Tibial artery (tissue), 4 donors: ENCODE measurements at regions of chr10 and their contacts with region 1.

Region 1: DNA sequence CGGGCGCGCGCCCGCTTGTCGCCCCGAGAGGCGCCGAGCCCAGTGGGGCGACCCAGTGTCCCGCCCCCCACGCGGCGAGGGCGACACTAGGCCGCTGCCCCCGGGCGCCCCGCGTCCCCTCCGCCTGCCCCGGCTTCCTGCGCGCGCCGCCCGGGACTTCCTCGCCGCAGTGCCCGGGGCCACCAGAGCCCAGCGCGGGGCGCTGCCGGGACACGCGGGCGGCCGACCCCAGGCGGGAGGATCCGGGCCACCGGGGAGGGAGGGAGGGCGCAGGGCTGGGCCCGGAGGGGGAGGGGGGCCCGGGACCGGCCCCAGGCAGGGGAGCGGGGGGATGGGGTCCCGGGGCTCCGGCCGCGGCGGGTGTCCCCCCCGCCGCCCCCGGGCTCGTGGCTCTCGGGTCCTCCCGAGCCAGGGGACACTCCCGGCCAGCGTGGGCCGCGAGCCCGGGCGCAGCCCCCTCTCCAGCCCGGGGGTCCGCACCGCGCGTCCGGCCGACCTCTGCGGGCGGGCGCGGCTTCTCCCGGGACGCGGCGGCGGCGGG is 435 bp upstream of the PWWP2B start:
- DNase-seq: peak in 1 of 2 donors; percentile 83
- H3K4me3 ChIP-seq: peak overlapping the region; percentile 98 to 99
- H3K27ac ChIP-seq: peak overlapping the region; percentile 84 to 98
- H3K4me1 ChIP-seq: peaks cover 0 to 56% (median 29%) of the 10 kb centered on the region in 4 donors
- H3K27me3 ChIP-seq: no peaks in the 10 kb centered on the region
- CTCF ChIP-seq: peak; percentile 36 to 49

Region 2: DNA sequence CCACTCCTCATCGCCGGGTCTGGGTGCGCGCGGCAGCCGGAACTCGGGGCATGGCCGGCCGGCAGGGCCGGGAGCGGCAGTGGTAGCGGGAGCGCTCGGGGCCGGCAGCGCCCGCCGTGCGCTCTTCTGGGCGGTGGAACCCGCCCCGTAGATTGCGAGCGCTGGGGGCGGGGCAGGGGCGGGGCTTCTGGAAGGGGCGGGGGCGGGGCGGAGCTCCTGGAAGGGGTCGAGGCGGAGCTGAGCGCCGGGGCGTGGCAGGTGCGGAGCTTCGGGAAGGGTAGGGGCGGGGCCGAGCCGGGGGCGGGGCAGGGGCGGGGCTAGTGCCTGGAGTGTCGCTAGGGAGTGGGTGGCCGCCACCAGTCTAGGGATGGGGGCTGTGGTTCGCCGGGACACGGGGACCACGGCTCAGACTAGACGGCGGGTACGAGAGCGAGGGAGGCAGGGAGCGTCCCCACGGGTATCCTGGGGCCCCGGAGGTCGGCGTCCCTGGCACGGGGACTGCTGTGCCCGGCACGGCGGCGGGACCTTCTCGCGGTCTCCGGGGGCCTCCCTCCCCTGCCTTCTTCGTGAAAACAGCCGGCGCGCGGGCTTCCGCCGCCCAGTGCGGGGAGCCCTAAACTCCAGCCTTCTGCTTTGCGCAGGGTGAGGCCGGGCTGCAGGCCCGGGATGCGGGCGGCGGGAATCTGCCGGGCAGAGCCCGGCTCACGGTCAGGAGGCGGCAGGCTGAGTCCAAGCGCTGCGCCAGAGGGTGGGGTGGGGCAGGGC is 88.6 kb before region 1 on chr10 and contains the start of gene STK32C:
- intact Hi-C with region 1: no loop called
- DNase-seq: peak; percentile 89 to 93
- H3K4me3 ChIP-seq: peak within 1 kb of the TSS; percentile 66 to 82
- H3K27ac ChIP-seq: peak within 1 kb of the TSS; percentile 80 to 89
- H3K4me1 ChIP-seq: peaks cover 0 to 19% (median 15%) of the 10 kb centered on the region in 4 donors
- H3K27me3 ChIP-seq: peaks cover 0 to 21% of the 10 kb centered on the region in 2 donors
- CTCF ChIP-seq: no peak

Region 3: DNA sequence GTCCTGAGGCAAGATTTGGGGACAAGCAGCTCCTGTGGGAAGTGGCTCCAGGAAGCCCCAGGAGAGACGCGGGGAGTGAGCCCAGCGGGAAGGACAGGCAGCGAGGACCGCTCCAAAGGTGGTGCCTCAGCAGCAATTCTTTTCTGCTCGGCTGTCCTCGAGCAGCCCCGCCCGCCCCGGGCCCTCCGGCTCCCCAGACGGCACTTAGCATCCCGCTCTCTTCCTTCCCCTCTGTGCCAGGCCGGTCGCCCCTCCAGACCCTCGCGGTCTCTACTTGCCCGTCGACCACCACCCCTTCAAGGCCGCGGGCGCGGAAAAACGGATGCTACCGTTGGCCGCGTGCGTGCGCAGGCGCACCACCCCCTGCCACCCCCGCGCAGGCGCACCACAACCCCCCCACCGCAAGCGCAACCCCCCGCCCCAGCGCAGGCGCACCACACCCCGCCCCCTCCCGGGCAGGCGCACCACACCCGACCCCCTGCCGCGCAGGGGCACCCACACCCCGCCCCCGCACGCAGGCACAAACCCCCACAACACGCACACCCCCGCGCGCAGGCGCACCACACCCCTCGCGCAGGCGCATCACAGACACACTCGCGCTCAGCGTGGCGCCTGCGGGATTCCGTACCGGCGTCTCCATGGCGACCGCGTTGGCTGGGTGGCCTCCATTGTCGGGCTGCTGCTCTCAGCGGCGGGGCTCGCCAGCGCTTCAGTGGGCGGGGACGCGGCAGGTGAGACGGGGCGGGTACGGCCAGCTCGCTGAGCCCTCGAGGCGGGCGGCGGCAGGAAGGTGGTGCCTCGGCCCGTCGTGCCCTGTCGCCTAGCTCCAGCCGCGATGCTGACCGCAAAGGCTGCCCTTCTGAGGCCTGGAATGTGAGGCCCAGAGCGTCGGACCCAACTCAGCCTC is 64.8 kb before region 1 on chr10 and contains the start of gene LRRC27:
- intact Hi-C with region 1: loop called (anchors 10 kb)
- DNase-seq: peak; percentile 97 to 99
- H3K4me3 ChIP-seq: peak within 1 kb of the TSS; percentile 76 to 78
- H3K27ac ChIP-seq: peak within 1 kb of the TSS; percentile 74 to 83
- H3K4me1 ChIP-seq: peaks cover 0 to 35% (median 23%) of the 10 kb centered on the region in 4 donors
- H3K27me3 ChIP-seq: no peaks in the 10 kb centered on the region
- CTCF ChIP-seq: no peak

Region 4: DNA sequence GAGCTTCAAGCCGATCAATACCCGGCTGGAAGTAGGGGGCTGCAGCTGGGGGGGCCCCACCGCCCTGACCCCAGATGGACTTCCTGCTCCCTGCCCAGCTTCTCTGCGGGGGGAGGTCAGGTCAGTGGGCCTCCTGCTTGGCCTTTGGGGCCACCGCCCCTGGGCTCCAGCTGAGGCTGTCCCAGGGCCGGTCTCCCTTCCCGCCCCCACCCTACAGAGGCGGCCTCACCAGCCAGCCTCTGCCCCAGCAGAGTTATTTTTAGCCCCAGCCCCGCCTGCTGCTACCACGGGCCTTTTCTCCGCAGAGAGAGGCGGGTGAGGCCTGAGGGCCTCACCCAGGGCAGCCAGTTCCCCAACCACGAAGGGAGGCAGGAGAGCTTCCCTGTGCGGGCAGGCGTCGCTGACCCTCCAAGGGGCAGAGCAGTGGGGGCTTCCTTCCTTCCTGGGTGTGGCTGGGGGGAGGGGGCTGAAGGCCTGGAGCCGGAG is 24.9 kb after region 1 on chr10:
- intact Hi-C with region 1: loop called (anchors 1 kb)
- DNase-seq: peak; percentile 83 to 93
- H3K4me3 ChIP-seq: peak overlapping the region; percentile 25 to 42
- H3K27ac ChIP-seq: peak overlapping the region; percentile 89 to 91
- H3K4me1 ChIP-seq: peaks cover 13 to 55% (median 40%) of the 10 kb centered on the region in 4 donors
- H3K27me3 ChIP-seq: no peaks in the 10 kb centered on the region
- CTCF ChIP-seq: no peak

Region 5: DNA sequence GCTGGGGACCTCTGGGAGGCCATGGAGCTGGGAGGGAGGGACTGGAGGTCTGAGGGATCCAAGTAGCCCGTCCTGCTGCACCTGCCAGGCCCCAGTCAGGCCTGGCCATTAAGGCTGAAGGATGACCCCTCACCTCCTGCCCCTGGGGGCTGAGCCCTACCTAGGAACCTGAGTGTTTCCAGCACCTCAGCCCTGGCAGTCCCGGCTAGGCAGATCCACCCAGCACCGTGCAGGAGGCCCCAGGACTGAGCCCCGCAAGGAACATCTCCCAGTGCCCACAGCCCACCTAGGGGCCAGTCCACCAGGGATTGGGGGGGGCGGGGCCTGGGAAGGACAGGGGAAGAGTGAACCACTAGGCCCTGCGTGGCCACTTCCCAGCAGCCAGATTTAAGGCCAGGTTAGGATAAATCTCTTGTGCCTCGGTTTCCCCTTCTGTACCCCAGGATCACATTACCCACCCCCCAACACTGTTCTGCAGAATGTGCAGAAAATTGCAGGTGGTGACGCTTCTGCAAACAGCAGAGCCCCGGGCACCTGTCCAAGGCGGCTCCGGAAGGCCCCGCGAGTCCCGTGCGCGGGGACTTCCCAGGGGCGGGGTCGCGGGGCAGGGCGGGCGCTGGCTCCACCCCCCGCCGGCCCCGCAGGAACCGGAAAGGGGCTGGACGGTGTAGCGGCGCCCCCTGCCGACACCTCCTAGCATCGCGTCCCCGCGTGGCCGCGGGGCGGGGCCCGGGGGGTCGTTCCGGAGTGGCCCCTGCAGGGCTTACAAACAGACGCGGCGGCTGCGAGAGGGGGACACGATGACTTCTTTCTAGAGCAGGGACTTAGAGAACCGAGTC is 56.3 kb after region 1 on chr10:
- intact Hi-C with region 1: loop called (anchors 2 kb)
- DNase-seq: peak; percentile 68 to 89
- H3K4me3 ChIP-seq: peak overlapping the region in 1 of 2 donors; percentile 7
- H3K27ac ChIP-seq: peak overlapping the region in 1 of 2 donors; percentile 5
- H3K4me1 ChIP-seq: peaks cover 0 to 22% (median 13%) of the 10 kb centered on the region in 4 donors
- H3K27me3 ChIP-seq: peaks cover 0 to 11% of the 10 kb centered on the region in 2 donors
- CTCF ChIP-seq: peak; percentile 94 to 97

Region 6: DNA sequence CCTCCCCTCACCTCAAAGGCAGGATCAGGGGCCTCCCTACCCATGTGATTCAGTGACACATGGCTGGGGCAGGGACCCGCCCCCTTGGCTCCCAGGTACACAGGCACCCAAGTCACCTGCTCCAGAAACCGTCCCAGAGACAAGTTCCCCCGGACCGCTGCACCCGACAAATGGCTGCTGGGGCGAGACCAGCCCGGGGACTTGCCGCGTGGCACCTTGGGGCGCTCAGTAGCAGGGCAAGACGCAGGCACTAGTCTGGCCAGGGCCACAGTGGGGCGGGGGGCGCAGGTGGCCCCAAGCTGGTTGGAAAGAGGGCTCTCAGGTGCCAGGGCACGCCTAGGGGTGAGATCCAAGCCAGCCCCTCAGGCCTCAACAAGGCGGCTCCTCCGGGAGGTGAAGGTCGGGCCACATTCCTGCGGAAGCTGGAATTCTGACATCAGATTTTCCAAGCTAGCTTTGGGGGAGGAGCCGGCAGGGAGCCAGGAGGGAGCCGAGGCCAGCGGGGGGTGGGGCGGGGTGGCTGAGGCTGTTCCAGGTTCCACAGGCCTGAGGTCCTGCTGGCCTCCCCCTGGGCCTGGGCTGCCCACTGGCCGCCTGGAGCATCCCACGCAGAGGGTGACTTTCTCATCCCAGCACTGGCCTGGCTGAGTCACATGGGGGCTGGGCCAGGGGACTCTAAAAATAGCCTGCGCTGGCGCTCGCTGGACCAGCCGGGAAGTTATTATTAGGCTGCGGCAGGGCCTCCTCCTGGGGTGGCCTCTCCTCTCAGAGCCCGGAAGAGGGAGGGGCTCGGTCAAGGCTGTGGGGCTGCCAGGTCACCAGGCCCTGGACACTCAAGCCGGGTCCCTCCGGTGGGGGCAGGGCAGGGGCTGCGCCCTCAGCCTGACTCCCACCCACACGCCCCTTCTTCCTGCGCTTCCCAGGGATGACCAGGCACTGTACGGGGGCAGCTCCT is 120.5 kb after region 1 on chr10:
- intact Hi-C with region 1: loop called (anchors 10 kb)
- DNase-seq: peak; percentile 94 to 99
- H3K4me3 ChIP-seq: peak overlapping the region; percentile 15 to 38
- H3K27ac ChIP-seq: peak overlapping the region; percentile 88 to 89
- H3K4me1 ChIP-seq: peaks cover 33 to 68% (median 57%) of the 10 kb centered on the region in 4 donors
- H3K27me3 ChIP-seq: no peaks in the 10 kb centered on the region
- CTCF ChIP-seq: no peak

Region 7: GRCh38 chr10:132643709-132644526 is 247.4 kb after region 1 on chr10:
- intact Hi-C with region 1: loop called (anchors 10 kb)
- DNase-seq: peak in 1 of 2 donors; percentile 61
- H3K4me3 ChIP-seq: no peak overlapping the region
- H3K27ac ChIP-seq: no peak overlapping the region
- H3K4me1 ChIP-seq: peaks cover 0 to 29% (median 7%) of the 10 kb centered on the region in 4 donors
- H3K27me3 ChIP-seq: no peaks in the 10 kb centered on the region
- CTCF ChIP-seq: no peak